Prostate gland (tissue), 2 donors: ENCODE measurements at regions of chr10 and their contacts with region 1.

Region 1: GRCh38 chr10:118041316-118041715 is 5.4 kb downstream of the RAB11FIP2 start:
- DNase-seq: no peak
- H3K4me3 ChIP-seq: no peak overlapping the region
- H3K27ac ChIP-seq: no peak overlapping the region
- H3K4me1 ChIP-seq: peaks cover 12% of the 10 kb centered on the region
- H3K27me3 ChIP-seq: no peaks in the 10 kb centered on the region
- CTCF ChIP-seq: no peak
- POLR2A ChIP-seq: no peak

Region 2: GRCh38 chr10:117804470-117805011 is 236.8 kb before region 1 on chr10:
- intact Hi-C with region 1: loop called (anchors 5 kb)
- DNase-seq: peak; percentile 12
- H3K4me3 ChIP-seq: no peak overlapping the region
- H3K27ac ChIP-seq: peak overlapping the region; percentile 1 to 69
- H3K4me1 ChIP-seq: no peaks in the 10 kb centered on the region
- H3K27me3 ChIP-seq: no peaks in the 10 kb centered on the region
- CTCF ChIP-seq: no peak
- POLR2A ChIP-seq: no peak